ENCODE measurements at regions of chr7 and their contacts with region 1.

Region 1: DNA sequence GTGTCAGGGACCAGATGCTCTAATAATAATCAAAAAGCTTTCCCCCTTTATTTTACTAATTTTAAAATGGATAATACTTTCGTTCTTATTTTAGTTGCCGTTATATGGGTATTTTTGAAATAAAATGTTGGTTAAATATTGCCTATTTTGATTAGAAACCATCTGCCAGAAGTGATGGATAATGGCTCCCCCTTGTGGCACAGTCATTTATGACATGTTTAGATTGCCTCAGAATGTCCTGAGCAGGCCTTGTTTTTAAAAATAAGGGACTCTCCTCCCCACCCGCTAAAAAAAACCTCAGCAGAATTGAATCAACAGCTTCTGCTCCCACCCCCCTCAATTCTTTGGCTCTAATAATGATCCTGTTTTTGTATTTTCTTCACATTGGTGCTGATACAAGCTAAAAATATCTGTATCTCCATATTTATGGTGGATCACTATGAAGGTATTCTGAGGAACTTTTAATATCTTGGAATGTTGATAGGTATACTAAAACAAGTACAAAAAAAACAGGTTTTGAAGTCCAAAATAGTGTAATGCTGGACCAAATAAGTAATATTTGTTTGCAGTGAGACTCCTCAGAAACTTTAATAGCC is 38.8 kb downstream of the TMEM60 start:
- DNase-seq: peak in 1 of 3 donors; percentile 65
- ATAC-seq: peak; percentile 80 to 87 (median 84)
- H3K4me3 ChIP-seq: no peak overlapping the region
- H3K27ac ChIP-seq: peak overlapping the region; percentile 64 to 80 (median 73)
- H3K4me1 ChIP-seq: peaks cover 0 to 14% (median 6%) of the 10 kb centered on the region in 4 donors
- H3K27me3 ChIP-seq: no peaks in the 10 kb centered on the region
- CTCF ChIP-seq: peak; percentile 77 to 89 (median 80)
- POLR2A ChIP-seq: no peak

Region 2: DNA sequence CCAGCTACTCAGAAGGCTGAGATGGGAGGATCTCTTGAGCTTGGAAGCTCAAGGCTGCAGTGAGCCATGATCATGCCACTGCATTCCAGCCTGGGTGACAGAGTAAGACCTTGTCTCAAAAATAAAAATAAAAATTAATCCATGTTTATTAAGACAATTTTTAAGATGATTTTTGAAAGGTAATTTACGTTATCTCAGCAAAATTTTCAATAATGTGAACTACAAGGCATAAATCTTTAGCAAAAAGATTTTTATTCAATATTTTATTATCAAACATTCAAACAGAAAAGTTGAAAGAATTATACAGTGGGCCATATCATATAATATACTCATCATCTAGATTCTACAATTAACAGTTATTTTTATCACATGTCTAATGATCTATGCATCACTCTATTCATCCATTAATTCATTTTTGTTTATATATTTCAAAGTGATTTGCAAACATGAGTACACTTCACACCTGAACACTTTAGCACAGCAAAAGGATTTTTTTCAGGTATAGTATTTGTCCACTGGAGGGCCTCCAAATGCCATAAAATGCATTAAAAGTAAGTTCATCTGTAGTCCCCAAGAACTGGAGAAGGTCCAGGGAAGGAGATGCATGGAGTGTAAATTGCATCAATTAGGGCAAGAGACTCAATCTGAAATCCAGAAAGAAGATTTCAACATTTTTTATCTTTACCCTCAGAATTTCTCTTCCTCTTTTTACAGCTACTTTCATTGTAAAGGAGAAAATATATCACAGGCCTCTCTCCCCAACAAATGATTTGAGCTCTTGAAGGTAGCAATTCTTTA is 101.8 kb before region 1 on chr7:
- intact Hi-C with region 1: loop called in 1 of 2 experiments (anchors 10 kb)
- DNase-seq: no peak
- ATAC-seq: peak; percentile 80 to 86 (median 82)
- H3K4me3 ChIP-seq: no peak overlapping the region
- H3K27ac ChIP-seq: no peak overlapping the region
- H3K4me1 ChIP-seq: peaks cover 0 to 8% (median 0%) of the 10 kb centered on the region in 4 donors
- H3K27me3 ChIP-seq: no peaks in the 10 kb centered on the region
- CTCF ChIP-seq: peak; percentile 47 to 62 (median 60)
- POLR2A ChIP-seq: no peak

Region 3: DNA sequence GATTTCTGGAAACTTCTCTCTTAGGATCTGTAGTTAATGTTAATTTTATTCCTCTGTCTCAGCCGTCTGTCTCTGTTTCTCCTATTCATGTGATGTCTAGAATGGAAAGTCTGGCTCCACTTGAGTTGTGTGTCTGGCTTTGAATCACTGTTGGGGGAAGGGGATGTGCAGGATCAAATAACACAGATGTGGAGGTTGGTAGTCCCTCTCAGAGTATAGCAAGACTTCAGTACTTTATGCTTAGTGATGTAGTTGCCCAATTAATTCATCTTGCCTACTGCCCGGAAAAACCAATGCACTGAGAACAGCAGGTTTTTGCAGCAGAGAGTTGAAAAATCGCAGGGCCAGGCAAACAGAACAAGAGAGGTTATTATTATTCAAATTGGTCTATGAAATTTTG is 118.4 kb after region 1 on chr7:
- intact Hi-C with region 1: no loop called
- DNase-seq: no peak
- ATAC-seq: no peak
- H3K4me3 ChIP-seq: no peak overlapping the region
- H3K27ac ChIP-seq: no peak overlapping the region
- H3K4me1 ChIP-seq: no peaks in the 10 kb centered on the region
- H3K27me3 ChIP-seq: no peaks in the 10 kb centered on the region
- CTCF ChIP-seq: no peak
- POLR2A ChIP-seq: no peak